ENCODE measurements at regions of chr18 and their contacts with region 1.

Region 1: GRCh38 chr18:66749030-66749429 is 145.1 kb upstream of the CDH19 start:
- DNase-seq: peak; percentile 50
- ATAC-seq: peak; percentile 69
- H3K4me3 ChIP-seq: no peak overlapping the region
- H3K27ac ChIP-seq: no peak overlapping the region
- H3K4me1 ChIP-seq: no peaks in the 10 kb centered on the region
- H3K27me3 ChIP-seq: peaks cover 2% of the 10 kb centered on the region; the same call in 1 of the 2 replicates
- CTCF ChIP-seq: peak; percentile 65

Region 2: DNA sequence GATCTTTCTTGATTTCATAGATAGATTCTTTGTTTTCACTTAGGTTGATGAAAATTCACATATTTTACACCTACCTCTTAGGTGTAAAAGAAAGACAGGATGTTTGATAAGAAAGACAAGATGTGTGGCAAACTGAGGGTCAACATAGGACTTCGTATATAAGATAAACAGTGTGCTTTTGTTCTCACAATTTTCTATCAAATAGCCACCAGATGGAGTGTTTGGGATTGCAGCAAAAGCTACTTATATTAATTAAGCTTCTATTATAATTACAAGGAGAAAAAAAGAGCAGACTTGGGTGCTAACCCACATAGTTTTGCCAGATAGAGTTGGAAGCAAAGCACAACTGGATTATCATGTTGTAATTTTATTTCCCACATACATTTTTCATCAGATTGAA is 765.3 kb before region 1 on chr18:
- CTCF ChIA-PET with region 1: no interaction called
- POLR2A ChIA-PET with region 1: no interaction called
- intact Hi-C with region 1: loop called (anchors 10 kb)
- DNase-seq: peak; percentile 30
- ATAC-seq: no peak
- H3K4me3 ChIP-seq: no peak overlapping the region
- H3K27ac ChIP-seq: no peak overlapping the region
- H3K4me1 ChIP-seq: no peaks in the 10 kb centered on the region
- H3K27me3 ChIP-seq: no peaks in the 10 kb centered on the region
- CTCF ChIP-seq: peak; percentile 54

Region 3: GRCh38 chr18:66511810-66512209 is 237.2 kb before region 1 on chr18:
- CTCF ChIA-PET with region 1: no interaction called
- POLR2A ChIA-PET with region 1: no interaction called
- intact Hi-C with region 1: loop called (anchors 5 kb)
- DNase-seq: peak; percentile 72
- ATAC-seq: peak; percentile 86
- H3K4me3 ChIP-seq: no peak overlapping the region
- H3K27ac ChIP-seq: peak overlapping the region; percentile 19; the same call in 1 of the 2 replicates
- H3K4me1 ChIP-seq: peaks cover 19% of the 10 kb centered on the region
- H3K27me3 ChIP-seq: no peaks in the 10 kb centered on the region
- CTCF ChIP-seq: no peak

Region 4: DNA sequence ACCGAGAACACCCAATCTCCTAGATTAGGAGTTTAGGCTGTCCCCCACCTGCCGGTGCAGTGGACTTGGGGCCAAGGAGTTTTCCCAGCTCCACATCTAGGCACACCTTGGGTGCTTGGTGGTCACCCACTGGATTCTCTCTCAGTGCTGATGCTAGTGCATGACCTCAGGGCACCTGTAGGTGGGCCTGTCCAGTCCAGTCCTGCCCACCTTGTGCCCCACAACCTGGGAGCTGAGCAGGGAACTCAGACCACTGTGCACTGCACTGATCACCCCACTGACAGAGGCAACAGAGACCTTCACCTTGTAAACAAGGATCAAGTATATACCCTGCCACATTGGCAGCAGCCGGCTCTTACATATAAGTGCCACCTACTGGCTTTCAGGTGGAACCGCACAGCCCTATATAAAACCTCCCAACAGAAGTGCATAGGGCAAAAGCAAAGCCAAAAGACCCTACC is 132.5 kb before region 1 on chr18:
- CTCF ChIA-PET with region 1: interaction called, 4 read pairs
- POLR2A ChIA-PET with region 1: no interaction called
- intact Hi-C with region 1: loop called (anchors 5 kb)
- DNase-seq: peak; percentile 57
- ATAC-seq: peak; percentile 94
- H3K4me3 ChIP-seq: no peak overlapping the region
- H3K27ac ChIP-seq: no peak overlapping the region
- H3K4me1 ChIP-seq: no peaks in the 10 kb centered on the region
- H3K27me3 ChIP-seq: no peaks in the 10 kb centered on the region
- CTCF ChIP-seq: peak; percentile 85

Region 5: DNA sequence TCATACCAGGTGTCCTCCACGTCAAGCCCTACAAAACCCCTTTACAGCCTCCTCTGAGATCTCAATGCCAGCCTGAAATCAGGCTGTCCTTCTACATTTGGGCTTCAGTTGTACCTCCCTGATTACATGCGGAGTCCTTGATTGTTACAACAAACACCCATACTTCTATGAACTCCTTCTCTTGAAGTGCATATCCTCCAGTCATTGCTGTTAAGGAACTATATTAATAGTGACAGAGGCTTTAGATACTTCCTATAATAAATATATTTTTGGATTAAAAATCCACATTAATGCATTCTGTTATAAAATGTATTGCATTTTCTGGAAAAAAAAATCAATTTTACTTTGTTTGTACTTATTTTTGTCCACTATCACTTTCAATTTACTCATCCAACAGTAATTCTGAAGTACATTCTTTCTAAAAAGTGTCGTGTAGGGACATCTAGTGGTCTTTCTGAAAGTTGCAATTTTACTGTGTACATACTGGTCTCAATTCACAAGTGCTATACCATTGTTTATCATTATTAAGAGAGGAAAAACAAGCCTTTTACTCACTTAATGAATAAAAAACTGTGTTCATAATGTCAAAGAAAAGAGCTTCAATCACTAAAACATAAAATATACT is 451.1 kb after region 1 on chr18:
- CTCF ChIA-PET with region 1: no interaction called
- POLR2A ChIA-PET with region 1: no interaction called
- intact Hi-C with region 1: loop called (anchors 5 kb)
- DNase-seq: peak; percentile 80
- ATAC-seq: peak; percentile 84
- H3K4me3 ChIP-seq: no peak overlapping the region
- H3K27ac ChIP-seq: no peak overlapping the region
- H3K4me1 ChIP-seq: no peaks in the 10 kb centered on the region
- H3K27me3 ChIP-seq: no peaks in the 10 kb centered on the region
- CTCF ChIP-seq: peak; percentile 74

Measured in PC-3 (cell line).